ENCODE measurements at regions of chr3 and their contacts with region 1.

Region 1: GRCh38 chr3:42590989-42591756 is 513 bp downstream of the SS18L2 start:
- DNase-seq: peak; percentile 25
- H3K4me3 ChIP-seq: peak overlapping the region; percentile 95
- H3K27ac ChIP-seq: peak overlapping the region; percentile 62
- H3K4me1 ChIP-seq: peaks cover 26% of the 10 kb centered on the region
- CTCF ChIP-seq: no peak

Region 2: GRCh38 chr3:42473083-42473932 is 117.9 kb before region 1 on chr3:
- CTCF ChIA-PET with region 1: no interaction called
- POLR2A ChIA-PET with region 1: no interaction called
- intact Hi-C with region 1: no loop called
- DNase-seq: no peak
- H3K4me3 ChIP-seq: no peak overlapping the region
- H3K27ac ChIP-seq: no peak overlapping the region
- H3K4me1 ChIP-seq: no peaks in the 10 kb centered on the region
- CTCF ChIP-seq: no peak

Region 3: DNA sequence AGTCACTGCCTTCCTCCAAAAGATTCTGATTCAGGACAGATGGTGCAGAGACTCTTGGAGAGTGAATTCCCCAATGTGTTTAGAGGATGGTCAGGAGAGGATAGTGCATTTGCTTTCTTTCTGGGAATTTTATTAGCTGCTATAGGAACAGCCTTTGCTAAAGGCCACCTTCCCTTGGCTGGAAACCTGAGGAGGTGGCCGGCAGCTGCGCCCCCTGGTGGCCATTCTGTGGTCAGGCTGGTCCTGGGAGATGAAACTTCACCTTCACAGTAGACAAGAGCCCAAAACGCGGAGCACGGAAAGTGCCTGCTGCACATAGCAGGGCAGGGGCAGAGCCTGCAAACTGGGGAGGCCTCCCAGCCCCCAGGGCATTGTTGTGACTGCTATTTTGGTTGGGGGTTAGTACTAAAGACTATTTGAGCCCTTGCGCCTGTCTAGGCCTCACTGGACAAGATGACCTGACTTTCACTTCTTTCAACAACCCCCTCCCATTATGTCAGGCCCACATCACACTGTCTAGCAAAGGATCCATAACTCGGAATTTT is 43.7 kb before region 1 on chr3:
- CTCF ChIA-PET with region 1: no interaction called
- POLR2A ChIA-PET with region 1: no interaction called
- intact Hi-C with region 1: no loop called
- DNase-seq: peak; percentile 58
- H3K4me3 ChIP-seq: no peak overlapping the region
- H3K27ac ChIP-seq: no peak overlapping the region
- H3K4me1 ChIP-seq: no peaks in the 10 kb centered on the region
- CTCF ChIP-seq: peak; percentile 99

Region 4: GRCh38 chr3:42575137-42575741 is 15.9 kb before region 1 on chr3:
- CTCF ChIA-PET with region 1: no interaction called
- POLR2A ChIA-PET with region 1: interaction called, 11 read pairs
- intact Hi-C with region 1: no loop called
- DNase-seq: no peak
- H3K4me3 ChIP-seq: no peak overlapping the region
- H3K27ac ChIP-seq: no peak overlapping the region
- H3K4me1 ChIP-seq: peaks cover 8% of the 10 kb centered on the region
- CTCF ChIP-seq: no peak

Measured in OCI-LY7 (cell line).